MCF 10A (cell line): ENCODE measurements at regions of chr15 and their contacts with region 1.

Region 1: GRCh38 chr15:83436458-83437158 is 10.5 kb upstream of the SH3GL3 start:
- DNase-seq: peak; percentile 74
- H3K4me3 Mint-ChIP-seq: no peak overlapping the region
- H3K27ac Mint-ChIP-seq: no peak overlapping the region
- H3K4me1 Mint-ChIP-seq: peaks cover 20% of the 10 kb centered on the region
- H3K27me3 Mint-ChIP-seq: no peaks in the 10 kb centered on the region
- CTCF ChIP-seq: peak; percentile 59

Region 2: GRCh38 chr15:83248151-83249029 is 188.2 kb before region 1 on chr15:
- CTCF ChIA-PET with region 1: interaction called, 234 read pairs
- POLR2A ChIA-PET with region 1: interaction called, 44 read pairs
- intact Hi-C with region 1: loop called (anchors 1 kb)
- DNase-seq: peak; percentile 72
- H3K4me3 Mint-ChIP-seq: no peak overlapping the region
- H3K27ac Mint-ChIP-seq: no peak overlapping the region
- H3K4me1 Mint-ChIP-seq: peaks cover 26% of the 10 kb centered on the region
- H3K27me3 Mint-ChIP-seq: no peaks in the 10 kb centered on the region
- CTCF ChIP-seq: peak; percentile 91

Region 3: DNA sequence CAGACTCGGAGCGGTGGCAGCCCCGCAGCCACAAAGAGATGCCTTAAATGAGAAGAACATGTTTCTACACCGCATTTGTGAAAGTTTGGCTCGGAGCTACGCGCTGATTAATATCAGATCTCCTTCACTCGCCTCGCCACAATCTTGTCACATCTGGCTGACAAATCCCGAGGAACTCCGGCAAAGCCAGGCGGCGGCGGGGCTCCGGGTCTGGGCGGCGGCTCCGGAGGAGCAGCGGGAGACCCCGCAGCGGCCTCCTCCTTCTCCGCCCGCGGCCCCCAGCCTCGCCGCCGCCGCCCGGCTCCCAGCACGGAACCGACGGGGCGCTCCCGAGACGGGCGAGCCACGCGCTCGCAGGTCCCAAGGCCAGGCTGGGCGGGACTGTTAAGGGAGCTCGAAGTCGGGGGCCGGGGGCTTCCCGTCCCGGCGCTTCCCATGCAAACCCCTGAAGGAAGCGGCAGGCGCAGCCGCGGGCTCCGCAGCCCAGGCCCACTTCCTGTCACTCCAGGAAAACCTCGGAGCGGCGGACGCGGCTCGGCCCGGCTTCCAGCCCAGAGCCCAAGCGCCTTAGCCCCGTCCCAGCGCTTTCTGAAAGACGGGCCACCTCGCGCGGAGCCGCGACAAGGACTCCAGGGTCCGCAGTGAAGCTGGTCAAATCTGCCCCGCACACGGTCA is 153.3 kb before region 1 on chr15:
- CTCF ChIA-PET with region 1: interaction called, 9 read pairs
- POLR2A ChIA-PET with region 1: interaction called, 4 read pairs
- intact Hi-C with region 1: loop called (anchors 2 kb)
- DNase-seq: no peak
- H3K4me3 Mint-ChIP-seq: peak overlapping the region; percentile 99
- H3K27ac Mint-ChIP-seq: peak overlapping the region; percentile 99
- H3K4me1 Mint-ChIP-seq: peaks cover 58% of the 10 kb centered on the region
- H3K27me3 Mint-ChIP-seq: no peaks in the 10 kb centered on the region
- CTCF ChIP-seq: no peak

Region 4: DNA sequence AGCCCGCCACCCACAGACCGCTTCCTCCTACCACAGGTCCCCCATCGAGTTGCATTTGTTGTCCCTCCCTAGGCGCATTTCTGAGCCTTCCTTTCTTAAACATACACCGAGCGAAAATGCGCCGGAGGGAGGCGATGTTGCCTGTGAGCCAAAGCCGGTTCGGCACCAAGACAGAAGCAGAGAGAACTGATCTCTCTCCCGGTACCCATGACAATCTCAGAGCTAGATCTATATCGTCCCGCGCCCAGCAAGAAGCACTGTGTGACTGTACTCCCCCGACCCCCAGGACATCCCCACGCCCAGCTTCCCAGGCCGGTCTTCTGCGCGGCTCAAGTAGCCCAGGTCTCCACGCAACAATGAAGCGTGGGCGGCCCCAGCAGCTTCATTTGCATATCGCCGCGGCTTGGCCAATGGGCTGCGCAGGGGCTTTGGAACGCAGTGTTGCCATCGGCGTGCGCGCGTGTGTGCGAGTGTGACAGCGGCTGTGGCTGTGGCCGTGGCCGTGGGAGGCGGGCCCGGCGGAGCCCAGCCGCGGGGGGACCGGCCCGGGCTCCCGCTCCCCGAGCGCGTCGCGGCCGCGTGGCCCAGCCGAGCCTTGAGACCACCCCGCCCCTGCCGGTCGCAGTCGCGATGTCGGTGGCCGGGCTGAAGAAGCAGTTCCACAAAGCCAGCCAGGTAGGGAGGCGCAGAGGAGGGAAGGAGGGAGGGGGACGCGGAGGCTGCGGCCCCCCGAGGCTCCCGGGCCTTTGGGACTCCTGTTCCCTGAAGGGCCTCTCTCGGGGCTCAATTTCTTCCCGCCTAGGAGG is 10.5 kb after region 1 on chr15 and contains the start of gene SH3GL3:
- CTCF ChIA-PET with region 1: interaction called, 28 read pairs
- POLR2A ChIA-PET with region 1: interaction called, 4 read pairs
- intact Hi-C with region 1: no loop called
- DNase-seq: peak; percentile 82
- H3K4me3 Mint-ChIP-seq: peak within 1 kb of the TSS; percentile 91
- H3K27ac Mint-ChIP-seq: peak within 1 kb of the TSS; percentile 68
- H3K4me1 Mint-ChIP-seq: peaks cover 11% of the 10 kb centered on the region
- H3K27me3 Mint-ChIP-seq: peaks cover 16% of the 10 kb centered on the region
- CTCF ChIP-seq: peak; percentile 51
- total RNA-seq, gene SH3GL3: 0.19 TPM in 1 of 2 replicates, not detected in the other

Region 5: GRCh38 chr15:83559310-83559966 is 122.8 kb after region 1 on chr15:
- CTCF ChIA-PET with region 1: interaction called, 186 read pairs
- POLR2A ChIA-PET with region 1: no interaction called
- intact Hi-C with region 1: loop called (anchors 1 kb)
- DNase-seq: peak; percentile 88
- H3K4me3 Mint-ChIP-seq: no peak overlapping the region
- H3K27ac Mint-ChIP-seq: no peak overlapping the region
- H3K4me1 Mint-ChIP-seq: peaks cover 6% of the 10 kb centered on the region
- H3K27me3 Mint-ChIP-seq: no peaks in the 10 kb centered on the region
- CTCF ChIP-seq: peak; percentile 79

Region 6: DNA sequence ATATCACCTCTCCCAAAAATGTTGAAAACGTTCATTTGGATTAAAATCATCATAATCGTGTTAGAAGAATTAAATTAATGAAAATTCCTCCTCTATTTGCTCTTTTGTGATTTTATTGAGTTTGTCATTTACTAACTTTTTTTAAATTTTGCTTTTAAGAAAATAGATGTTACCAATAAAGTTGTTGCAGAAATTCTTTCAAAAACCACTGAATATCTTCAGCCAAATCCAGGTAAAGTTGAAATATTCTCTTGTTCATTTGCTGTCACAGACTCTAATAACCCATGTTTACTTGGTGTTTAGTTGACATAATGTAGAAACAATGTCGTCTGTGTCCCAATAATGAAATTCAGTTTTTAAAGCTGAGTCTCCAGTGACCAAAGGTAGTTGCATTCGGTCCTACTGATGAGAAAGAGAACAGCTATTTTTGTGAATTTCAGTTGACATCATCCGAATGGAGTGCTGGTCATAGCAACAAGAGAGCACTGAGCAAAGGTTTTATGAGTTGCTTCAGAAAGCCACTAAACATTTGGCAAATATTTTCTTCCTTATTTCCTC is 128.4 kb after region 1 on chr15:
- CTCF ChIA-PET with region 1: interaction called, 186 read pairs
- POLR2A ChIA-PET with region 1: no interaction called
- intact Hi-C with region 1: no loop called
- DNase-seq: no peak
- H3K4me3 Mint-ChIP-seq: no peak overlapping the region
- H3K27ac Mint-ChIP-seq: no peak overlapping the region
- H3K4me1 Mint-ChIP-seq: peaks cover 6% of the 10 kb centered on the region
- H3K27me3 Mint-ChIP-seq: no peaks in the 10 kb centered on the region
- CTCF ChIP-seq: no peak

Region 7: DNA sequence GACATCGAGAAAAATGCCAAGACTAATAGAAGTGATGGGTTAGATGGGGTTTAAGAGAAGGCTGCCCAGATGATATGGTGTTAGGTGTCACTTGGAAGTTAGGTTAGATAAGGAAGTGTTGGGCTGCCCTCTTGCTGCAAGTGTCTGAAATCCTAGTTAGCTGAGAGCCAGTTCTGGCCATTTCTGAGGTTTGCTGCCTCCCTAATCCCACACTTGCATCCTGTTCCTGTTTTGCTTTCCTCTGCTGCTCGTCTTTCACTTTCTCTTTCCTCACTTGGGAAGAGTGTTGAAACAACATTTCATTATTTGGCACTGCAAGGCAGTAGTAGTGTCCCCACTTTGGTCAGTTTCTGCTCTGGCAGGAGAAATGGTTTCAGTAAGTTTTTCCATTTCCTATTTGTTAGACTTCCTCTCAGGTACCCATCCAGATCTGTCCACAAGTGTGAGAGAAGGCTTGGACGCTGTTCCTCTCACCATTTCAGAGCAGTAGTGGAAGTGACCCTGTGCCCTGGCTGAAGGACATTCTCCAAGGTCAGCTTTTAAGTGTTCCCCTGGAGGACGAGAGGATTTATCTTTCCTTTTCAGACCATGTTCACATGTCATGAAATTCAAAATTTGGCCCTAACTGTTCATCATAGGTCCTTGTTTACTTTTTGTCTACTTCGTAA is 310.6 kb after region 1 on chr15:
- CTCF ChIA-PET with region 1: no interaction called
- POLR2A ChIA-PET with region 1: no interaction called
- intact Hi-C with region 1: loop called (anchors 5 kb)
- DNase-seq: peak; percentile 60
- H3K4me3 Mint-ChIP-seq: peak overlapping the region; percentile 37
- H3K27ac Mint-ChIP-seq: no peak overlapping the region
- H3K4me1 Mint-ChIP-seq: peaks cover 10% of the 10 kb centered on the region
- H3K27me3 Mint-ChIP-seq: no peaks in the 10 kb centered on the region
- CTCF ChIP-seq: peak; percentile 33